ENCODE measurements at regions of chr19 and their contacts with region 1.

Region 1: GRCh38 chr19:54612428-54612827 is 17.9 kb upstream of the LILRB1 start:
- DNase-seq: no peak
- ATAC-seq: no peak

Region 2: DNA sequence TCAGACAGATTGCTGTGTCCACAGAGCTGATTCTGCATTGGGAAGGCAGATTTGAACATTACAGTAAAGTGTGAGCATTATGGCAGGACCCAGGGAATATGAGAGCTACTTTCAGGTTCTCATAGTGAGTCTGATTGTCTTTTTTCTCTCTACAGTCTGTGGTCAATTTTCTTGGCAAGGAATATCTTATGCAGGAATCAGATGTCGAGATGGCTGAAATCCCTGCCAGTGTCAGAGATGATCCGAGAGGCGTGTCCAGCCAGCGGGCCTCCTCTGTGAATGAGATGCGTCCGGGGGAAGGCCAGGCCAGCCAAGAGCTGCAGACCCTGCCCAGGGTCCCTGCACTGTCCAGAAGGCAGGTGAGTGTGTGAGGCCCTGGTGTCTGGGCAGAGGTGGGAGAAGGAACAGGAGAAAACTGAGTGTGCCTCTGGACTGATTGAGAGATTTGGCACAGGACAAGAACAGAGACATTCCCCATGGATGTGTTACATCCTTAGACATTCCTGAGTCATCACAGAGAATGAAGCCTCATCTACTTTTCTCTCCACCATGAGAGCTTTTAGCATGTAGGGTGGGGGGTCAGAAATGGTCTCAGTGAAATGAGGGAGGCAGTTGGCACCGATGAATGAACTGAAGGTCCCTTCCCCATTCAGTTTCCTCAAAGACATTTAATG is 1632.8 kb after region 1 on chr19:
- intact Hi-C with region 1: loop called (anchors 5 kb)
- DNase-seq: no peak
- ATAC-seq: no peak